PC-9 (cell line): ENCODE measurements at regions of chr12 and their contacts with region 1.

Region 1: DNA sequence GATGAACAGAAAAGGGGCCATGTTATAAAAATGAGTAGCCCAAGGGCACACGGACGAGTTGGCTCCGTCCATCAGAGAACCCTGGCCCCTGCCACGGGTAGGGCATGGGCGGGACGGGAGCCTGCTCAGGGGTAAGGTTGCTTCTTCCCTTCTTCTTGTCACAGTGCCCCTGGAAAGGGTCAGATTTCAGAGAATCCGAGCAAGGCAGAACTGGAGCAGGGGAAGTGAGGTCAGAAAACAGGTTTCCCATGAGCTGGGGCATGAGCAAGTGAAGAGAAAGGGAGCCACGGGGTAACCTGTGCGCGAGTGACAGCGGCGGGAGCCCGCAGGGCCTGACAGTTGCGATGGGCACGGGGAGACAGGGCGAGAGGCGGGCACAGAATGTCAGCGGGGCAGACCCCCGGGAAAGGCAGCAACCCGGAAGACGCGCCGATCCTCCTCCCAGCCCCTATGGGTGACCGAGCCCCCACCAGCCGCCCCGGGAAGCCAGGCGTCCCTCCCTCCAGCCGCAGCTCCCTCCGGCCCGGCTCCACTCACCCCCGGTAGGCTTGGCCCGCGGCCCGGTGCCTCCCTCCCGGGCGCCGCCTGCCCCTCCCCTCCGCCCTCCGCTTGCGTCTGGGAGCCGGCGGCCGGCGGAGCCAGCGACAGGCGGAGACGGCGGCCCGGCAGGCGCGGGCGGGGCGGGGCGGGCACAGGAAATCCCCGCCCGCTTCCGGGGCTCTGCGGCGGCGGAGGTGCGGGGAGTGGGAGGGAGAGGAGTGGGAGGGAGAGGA is at the start of gene ZNF641:
- DNase-seq: peak; percentile 70 to 76
- H3K4me3 ChIP-seq: peak within 1 kb of the TSS; percentile 98
- H3K27ac ChIP-seq: peak within 1 kb of the TSS; percentile 75
- H3K4me1 ChIP-seq: peaks cover 7% of the 10 kb centered on the region
- H3K27me3 ChIP-seq: no peaks in the 10 kb centered on the region
- CTCF ChIP-seq: no peak
- total RNA-seq, gene ZNF641: 1.4 and 2.5 TPM in 2 replicates

Region 2: GRCh38 chr12:48302161-48302911 is 48.1 kb before region 1 on chr12:
- CTCF ChIA-PET with region 1: no interaction called
- POLR2A ChIA-PET with region 1: interaction called, 11 read pairs
- intact Hi-C with region 1: no loop called
- DNase-seq: no peak
- H3K4me3 ChIP-seq: no peak overlapping the region
- H3K27ac ChIP-seq: no peak overlapping the region
- H3K4me1 ChIP-seq: no peaks in the 10 kb centered on the region
- H3K27me3 ChIP-seq: no peaks in the 10 kb centered on the region
- CTCF ChIP-seq: no peak